K562 (cell line): ENCODE measurements at regions of chr5 and their contacts with region 1.

Region 1: GRCh38 chr5:33936004-33936380 is 194 bp upstream of the RXFP3 start:
- DNase-seq: peak; percentile 34 to 48 (median 46)
- ATAC-seq: peak; percentile 93
- H3K4me3 ChIP-seq: no peak overlapping the region
- H3K27ac ChIP-seq: no peak overlapping the region
- H3K4me1 ChIP-seq: peaks cover 0 to 18% of the 10 kb centered on the region in 2 experiments; a peak in 2 of 5 replicates
- H3K27me3 ChIP-seq: peaks cover 14 to 32% of the 10 kb centered on the region in 2 experiments
- CTCF ChIP-seq: no peak
- EP300 ChIP-seq: no peak
- POLR2A ChIP-seq: no peak
- RAD21 ChIP-seq: no peak

Region 2: DNA sequence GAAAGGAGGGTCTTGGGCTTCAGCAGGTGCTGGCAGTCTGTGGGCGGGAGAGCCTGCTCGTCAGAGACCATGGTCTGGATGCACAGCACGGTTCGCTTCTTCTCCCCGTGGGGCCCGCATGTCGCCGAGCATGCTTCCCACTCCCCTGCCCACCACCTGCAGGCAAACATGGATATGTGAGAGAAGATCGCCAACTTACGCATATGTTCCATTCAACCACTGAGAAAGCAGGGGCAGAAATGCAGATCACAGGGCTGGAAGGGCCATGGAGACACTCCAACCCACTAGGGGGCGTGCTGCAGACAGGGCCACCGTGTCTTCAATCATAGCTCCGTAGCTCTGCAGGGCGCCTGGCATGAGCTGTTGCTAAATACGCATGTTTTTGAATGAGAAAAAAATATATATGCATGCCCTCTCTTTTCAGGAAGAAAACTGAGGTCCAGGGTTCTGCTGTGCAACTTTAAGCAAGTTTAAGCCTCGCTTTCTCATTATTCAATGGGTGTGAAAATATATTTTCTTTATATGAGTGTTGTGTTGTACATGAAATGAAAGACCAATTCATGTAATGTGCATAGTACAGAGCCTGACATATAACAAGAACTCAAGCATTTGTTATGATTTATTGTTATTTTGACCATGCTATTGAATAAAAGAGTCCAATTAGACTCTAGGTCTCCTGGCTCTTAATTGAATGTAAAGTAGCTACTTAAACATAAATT is 347.2 kb before region 1 on chr5:
- CTCF ChIA-PET with region 1: no interaction called
- POLR2A ChIA-PET with region 1: no interaction called
- in situ Hi-C with region 1: no loop called
- intact Hi-C with region 1: loop called (anchors 2 kb)
- DNase-seq: peak; percentile 47 to 80 (median 58)
- ATAC-seq: peak; percentile 100
- H3K4me3 ChIP-seq: no peak overlapping the region
- H3K27ac ChIP-seq: no peak overlapping the region
- H3K4me1 ChIP-seq: peaks cover 0 to 4% of the 10 kb centered on the region in 2 experiments; a peak in 2 of 5 replicates
- H3K27me3 ChIP-seq: peaks cover 0 to 5% of the 10 kb centered on the region in 2 experiments; a peak in 1 of 5 replicates
- CTCF ChIP-seq: peak; percentile 70 to 91 (median 76)
- EP300 ChIP-seq: no peak
- POLR2A ChIP-seq: no peak
- RAD21 ChIP-seq: peak; percentile 36 to 63